GM10248 (cell line): ENCODE measurements at regions of chr17 and their contacts with region 1.

Region 1: GRCh38 chr17:32654324-32654723 is 167.5 kb downstream of the CDK5R1 start:
- DNase-seq: no peak
- CTCF ChIP-seq: no peak

Region 2: GRCh38 chr17:32596628-32597027 is 57.7 kb before region 1 on chr17:
- CTCF ChIA-PET with region 1: no interaction called
- POLR2A ChIA-PET with region 1: no interaction called
- DNase-seq: peak; percentile 61
- CTCF ChIP-seq: no peak

Region 3: GRCh38 chr17:32746698-32747097 is 92.4 kb after region 1 on chr17:
- CTCF ChIA-PET with region 1: no interaction called
- POLR2A ChIA-PET with region 1: no interaction called
- DNase-seq: no peak
- CTCF ChIP-seq: no peak

Region 4: DNA sequence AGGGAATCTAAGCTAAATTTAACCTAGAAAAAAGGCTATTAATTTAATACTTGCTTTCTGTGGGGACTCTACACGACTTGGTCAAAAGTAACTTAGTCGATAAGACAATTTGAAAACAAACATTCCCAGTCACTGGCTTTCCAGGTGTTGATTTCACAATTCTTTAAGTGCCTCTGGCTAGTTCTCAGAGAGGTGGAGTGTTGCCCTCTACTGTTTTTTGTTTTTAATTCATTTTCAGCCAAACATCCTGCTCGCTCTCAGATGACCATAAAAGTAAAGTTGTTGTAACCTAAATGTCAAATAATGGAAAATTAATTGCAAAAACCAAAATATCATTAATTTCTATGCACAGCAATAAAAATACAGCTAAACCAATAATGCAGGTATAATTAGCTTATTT is 115.5 kb after region 1 on chr17:
- CTCF ChIA-PET with region 1: no interaction called
- POLR2A ChIA-PET with region 1: no interaction called
- DNase-seq: no peak
- CTCF ChIP-seq: peak; percentile 9

Region 5: GRCh38 chr17:32859857-32860525 is 205.7 kb after region 1 on chr17:
- CTCF ChIA-PET with region 1: no interaction called
- POLR2A ChIA-PET with region 1: interaction called, 14 read pairs
- DNase-seq: peak; percentile 33
- CTCF ChIP-seq: no peak